K562 (cell line): ENCODE measurements at regions of chr12 and their contacts with region 1.

Region 1: DNA sequence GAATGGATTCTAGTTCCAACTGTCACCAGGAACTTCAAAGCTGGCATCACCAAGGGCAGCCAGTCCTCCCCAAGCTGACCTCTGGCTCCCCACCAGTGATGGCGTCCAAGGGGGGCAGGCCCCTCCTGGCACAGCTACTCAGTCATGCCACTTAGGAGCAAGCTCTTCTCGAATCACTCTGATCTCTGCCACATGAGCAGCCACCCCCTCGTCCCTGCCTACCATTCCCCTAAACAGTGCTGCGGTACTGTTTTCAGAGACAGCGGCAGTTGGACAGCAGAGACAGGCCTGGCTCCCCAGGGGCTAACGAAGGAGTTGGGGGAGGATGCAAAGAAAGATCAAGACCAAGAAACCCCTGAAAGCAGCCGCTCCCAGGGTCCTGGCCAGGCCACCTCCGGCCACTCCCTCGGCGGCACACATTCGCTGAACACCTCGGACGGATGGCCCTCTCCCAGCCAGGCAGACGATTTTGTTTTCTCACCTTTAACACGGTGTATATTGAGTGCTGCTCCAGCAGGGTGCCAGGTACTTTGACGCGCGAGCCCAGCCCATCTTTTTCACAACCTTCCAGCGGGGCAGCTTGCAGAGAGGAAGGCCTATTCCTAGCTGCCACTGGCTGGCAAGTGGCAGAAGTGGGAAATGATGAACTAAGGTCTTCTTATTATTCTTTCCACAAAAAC is 47.4 kb downstream of the ARL6IP4 start:
- DNase-seq: no peak
- ATAC-seq: no peak
- H3K4me3 ChIP-seq: no peak overlapping the region
- H3K27ac ChIP-seq: no peak overlapping the region
- H3K4me1 ChIP-seq: peaks cover 3 to 11% of the 10 kb centered on the region in 2 experiments; a peak in 4 of 5 replicates
- H3K27me3 ChIP-seq: no peaks in the 10 kb centered on the region
- CTCF ChIP-seq: no peak
- EP300 ChIP-seq: no peak
- POLR2A ChIP-seq: no peak
- RAD21 ChIP-seq: no peak

Region 2: DNA sequence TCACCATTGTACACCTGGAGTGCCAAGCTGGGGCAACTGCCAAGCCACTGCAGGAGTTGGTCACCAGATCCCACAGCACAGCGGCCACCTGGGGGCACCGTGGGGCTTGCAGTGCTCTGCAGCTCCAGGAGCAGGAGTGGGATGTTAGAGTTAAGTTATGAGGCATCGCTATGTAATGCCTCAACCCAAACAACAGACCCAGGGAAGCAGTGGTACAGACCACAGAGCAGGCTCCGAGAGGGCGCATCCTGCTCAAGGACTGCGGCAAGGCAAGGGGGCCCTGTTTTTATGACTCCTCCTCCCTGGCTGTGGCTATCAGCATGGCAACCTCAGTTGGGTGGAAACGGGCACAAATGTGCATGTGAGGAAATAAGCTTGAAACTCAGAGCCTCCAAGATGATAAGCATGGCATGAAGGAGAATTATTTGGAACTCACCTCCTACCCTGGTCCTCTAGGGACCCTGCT is 15.7 kb after region 1 on chr12:
- CTCF ChIA-PET with region 1: no interaction called
- POLR2A ChIA-PET with region 1: interaction called, 10 read pairs
- in situ Hi-C with region 1: no loop called
- intact Hi-C with region 1: no loop called
- DNase-seq: peak in 2 of 4 experiments; percentile 38 to 57
- ATAC-seq: peak; percentile 85
- H3K4me3 ChIP-seq: no peak overlapping the region
- H3K27ac ChIP-seq: no peak overlapping the region
- H3K4me1 ChIP-seq: no peaks in the 10 kb centered on the region
- H3K27me3 ChIP-seq: no peaks in the 10 kb centered on the region
- CTCF ChIP-seq: peak; percentile 64 to 73 (median 67)
- EP300 ChIP-seq: no peak
- POLR2A ChIP-seq: no peak
- RAD21 ChIP-seq: peak; percentile 72 to 81